MCF 10A (cell line): ENCODE measurements at regions of chr1 and their contacts with region 1.

Region 1: GRCh38 chr1:46442317-46443161 is 47.1 kb upstream of the DMBX1 start:
- DNase-seq: peak; percentile 94
- H3K4me3 Mint-ChIP-seq: peak overlapping the region; percentile 77
- H3K27ac Mint-ChIP-seq: no peak overlapping the region
- H3K4me1 Mint-ChIP-seq: peaks cover 13% of the 10 kb centered on the region
- H3K27me3 Mint-ChIP-seq: peaks cover 21% of the 10 kb centered on the region
- CTCF ChIP-seq: peak; percentile 85

Region 2: DNA sequence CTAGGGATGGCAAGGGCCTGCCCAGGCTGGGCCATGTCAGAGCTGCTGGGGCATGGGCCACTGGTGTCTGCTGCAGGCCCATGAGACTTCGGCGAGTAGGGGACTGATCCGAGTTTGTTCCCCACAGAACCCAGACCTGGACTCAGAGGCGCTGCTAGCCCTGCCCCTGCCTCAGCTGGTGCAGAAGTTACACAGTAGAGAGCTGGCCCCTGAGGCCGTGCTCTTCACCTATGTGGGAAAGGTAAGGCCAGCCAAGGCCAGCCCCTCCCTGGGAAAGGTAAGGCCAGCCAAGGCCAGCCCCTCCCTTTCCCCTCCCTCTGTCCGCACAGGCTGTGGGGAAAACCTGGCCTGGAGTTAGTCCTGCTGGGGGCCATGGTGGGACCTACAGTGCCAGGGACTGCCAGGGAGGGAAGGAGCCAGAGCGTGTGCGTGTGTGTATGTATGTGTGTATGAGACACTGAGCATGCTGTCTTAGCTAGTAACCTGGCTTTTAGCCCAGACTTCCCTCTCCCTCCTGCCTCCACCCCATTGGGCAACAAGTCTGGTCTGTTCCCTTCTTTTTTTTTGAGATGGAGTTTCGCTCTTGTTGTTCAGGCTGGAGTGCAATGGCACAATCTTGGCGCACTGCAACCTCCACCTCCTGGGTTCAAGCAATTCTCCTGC is 40.4 kb before region 1 on chr1:
- CTCF ChIA-PET with region 1: interaction called, 16 read pairs
- POLR2A ChIA-PET with region 1: interaction called, 3 read pairs
- intact Hi-C with region 1: no loop called
- DNase-seq: peak; percentile 97
- H3K4me3 Mint-ChIP-seq: peak overlapping the region; percentile 23
- H3K27ac Mint-ChIP-seq: no peak overlapping the region
- H3K4me1 Mint-ChIP-seq: peaks cover 7% of the 10 kb centered on the region
- H3K27me3 Mint-ChIP-seq: no peaks in the 10 kb centered on the region
- CTCF ChIP-seq: no peak

Region 3: DNA sequence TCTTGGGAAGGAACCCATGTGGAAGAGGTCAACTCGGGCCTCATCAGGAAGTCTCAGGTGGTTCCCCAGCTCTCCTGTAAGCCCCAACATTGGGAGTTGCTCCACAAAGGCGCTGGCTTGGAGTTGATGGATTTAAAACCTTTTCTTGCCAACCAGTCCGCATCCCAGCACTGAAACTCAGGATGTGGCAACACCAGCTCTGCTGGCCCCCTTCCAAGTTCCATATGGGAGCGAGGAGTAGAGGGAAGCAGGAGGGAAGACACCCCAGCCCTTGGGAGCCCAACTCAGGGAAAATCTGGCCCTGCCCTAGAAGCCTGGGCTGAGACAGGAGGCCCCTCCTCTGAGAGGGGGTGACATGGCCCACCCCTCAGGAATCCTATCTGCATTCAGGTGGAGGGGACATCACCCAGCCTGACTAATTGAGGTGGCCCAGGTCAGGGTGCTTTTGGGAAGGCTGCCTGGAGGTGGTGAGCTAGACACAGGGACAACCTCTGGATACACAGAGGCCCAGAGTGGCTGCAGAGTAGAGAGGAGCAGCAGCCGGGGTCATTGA is 13.9 kb after region 1 on chr1:
- CTCF ChIA-PET with region 1: interaction called, 41 read pairs
- POLR2A ChIA-PET with region 1: no interaction called
- intact Hi-C with region 1: no loop called
- DNase-seq: peak; percentile 77
- H3K4me3 Mint-ChIP-seq: no peak overlapping the region
- H3K27ac Mint-ChIP-seq: no peak overlapping the region
- H3K4me1 Mint-ChIP-seq: no peaks in the 10 kb centered on the region
- H3K27me3 Mint-ChIP-seq: peaks cover 56% of the 10 kb centered on the region
- CTCF ChIP-seq: no peak

Region 4: DNA sequence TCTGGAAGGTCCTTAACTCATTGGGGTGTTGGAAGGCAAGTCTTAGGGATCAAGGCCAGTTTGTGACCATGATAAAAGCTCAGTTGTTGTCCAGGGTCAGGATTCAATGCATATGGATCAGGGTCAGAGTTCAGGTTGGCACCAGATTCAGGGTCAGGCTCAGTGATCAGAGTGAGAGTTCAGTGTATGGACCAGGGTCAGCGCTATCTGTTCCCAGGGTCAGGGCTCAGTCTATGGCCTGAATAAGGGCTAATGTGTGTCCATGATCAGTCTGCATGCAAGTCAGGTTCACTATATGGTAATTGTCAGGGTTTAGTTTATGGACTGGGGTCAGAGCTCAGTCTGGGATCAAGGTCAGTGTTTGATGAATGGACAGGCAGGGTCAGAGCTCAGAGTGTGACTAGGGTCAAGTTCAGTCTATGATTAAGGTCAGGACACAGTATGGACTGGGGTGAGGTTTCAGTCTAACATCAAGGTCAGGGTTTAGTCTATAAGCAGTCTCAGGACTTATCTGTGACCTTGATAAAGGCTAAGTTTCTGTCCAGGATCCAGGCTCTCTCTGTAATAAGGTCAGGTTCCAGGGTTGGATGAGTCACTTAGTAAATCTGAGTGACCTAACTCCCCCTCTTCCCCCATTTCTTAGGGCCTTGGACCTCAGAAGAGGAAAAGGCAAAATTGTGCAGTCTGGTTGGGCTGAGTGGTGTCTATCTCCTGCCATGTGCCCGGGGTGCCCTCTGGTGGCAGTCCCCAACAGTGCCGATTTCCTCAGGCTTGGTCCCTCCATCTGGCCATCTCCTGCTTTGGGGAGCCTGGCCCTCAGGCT is 85.1 kb after region 1 on chr1:
- CTCF ChIA-PET with region 1: interaction called, 92 read pairs
- POLR2A ChIA-PET with region 1: interaction called, 4 read pairs
- intact Hi-C with region 1: loop called (anchors 1 kb)
- DNase-seq: peak; percentile 84
- H3K4me3 Mint-ChIP-seq: no peak overlapping the region
- H3K27ac Mint-ChIP-seq: no peak overlapping the region
- H3K4me1 Mint-ChIP-seq: peaks cover 16% of the 10 kb centered on the region
- H3K27me3 Mint-ChIP-seq: peaks cover 14% of the 10 kb centered on the region
- CTCF ChIP-seq: peak; percentile 92

Region 5: GRCh38 chr1:46547481-46548383 is 105.2 kb after region 1 on chr1:
- CTCF ChIA-PET with region 1: interaction called, 62 read pairs
- POLR2A ChIA-PET with region 1: no interaction called
- intact Hi-C with region 1: loop called (anchors 1 kb)
- DNase-seq: peak; percentile 73
- H3K4me3 Mint-ChIP-seq: no peak overlapping the region
- H3K27ac Mint-ChIP-seq: no peak overlapping the region
- H3K4me1 Mint-ChIP-seq: peaks cover under 1% of the 10 kb centered on the region
- H3K27me3 Mint-ChIP-seq: peaks cover 39% of the 10 kb centered on the region
- CTCF ChIP-seq: peak; percentile 66